ENCODE measurements at regions of chr15 and their contacts with region 1.

Region 1: DNA sequence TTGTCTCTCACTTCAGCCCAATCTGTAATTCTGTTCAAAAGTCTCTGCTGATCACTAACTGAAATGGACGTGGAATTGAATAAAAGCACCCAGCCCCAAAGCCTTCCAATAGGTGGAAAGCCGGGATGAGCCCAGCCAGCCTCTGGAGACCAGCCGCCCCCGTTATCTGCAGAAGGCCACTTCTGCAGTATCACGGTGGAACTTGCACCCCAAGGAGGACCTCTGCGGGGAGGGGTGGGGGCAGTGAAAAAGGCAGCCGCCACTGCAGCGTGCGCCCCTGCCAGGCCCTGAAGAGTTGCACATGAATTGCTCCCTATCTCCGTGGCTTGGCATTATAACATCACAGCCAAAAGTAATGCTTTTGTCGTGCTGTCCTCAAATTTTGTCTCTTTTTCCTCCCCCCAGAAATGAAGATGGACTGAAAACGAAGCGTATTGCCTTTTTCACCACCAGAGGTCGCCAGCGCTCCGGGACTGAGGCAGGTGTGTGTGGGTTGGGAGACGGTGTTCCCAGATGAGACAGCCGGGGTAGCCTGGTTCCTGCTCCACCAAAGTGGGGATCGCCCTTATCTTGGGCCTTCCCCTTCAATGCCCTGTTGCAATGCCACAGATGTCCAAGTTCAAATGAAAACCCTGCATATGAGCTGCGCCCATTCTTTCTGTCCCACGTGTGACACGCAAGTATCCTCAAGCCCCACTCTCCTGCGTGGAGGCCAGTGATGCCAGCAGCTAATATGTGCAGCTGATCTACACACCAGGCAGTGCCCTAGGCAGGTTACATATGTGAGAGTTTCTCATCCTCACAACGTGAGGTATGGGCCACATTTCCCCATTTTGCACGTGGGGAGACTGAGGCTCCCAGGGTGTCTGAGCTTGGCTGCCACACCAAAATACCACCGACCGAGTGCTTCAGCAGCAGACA is 96.0 kb downstream of the LRRK1 start:
- DNase-seq: peak; percentile 49
- ATAC-seq: peak; percentile 57
- H3K4me3 Mint-ChIP-seq: no peak overlapping the region
- H3K27ac Mint-ChIP-seq: no peak overlapping the region
- H3K4me1 Mint-ChIP-seq: no peaks in the 10 kb centered on the region
- H3K27me3 Mint-ChIP-seq: no peaks in the 10 kb centered on the region
- CTCF ChIP-seq: peak; percentile 56

Region 2: DNA sequence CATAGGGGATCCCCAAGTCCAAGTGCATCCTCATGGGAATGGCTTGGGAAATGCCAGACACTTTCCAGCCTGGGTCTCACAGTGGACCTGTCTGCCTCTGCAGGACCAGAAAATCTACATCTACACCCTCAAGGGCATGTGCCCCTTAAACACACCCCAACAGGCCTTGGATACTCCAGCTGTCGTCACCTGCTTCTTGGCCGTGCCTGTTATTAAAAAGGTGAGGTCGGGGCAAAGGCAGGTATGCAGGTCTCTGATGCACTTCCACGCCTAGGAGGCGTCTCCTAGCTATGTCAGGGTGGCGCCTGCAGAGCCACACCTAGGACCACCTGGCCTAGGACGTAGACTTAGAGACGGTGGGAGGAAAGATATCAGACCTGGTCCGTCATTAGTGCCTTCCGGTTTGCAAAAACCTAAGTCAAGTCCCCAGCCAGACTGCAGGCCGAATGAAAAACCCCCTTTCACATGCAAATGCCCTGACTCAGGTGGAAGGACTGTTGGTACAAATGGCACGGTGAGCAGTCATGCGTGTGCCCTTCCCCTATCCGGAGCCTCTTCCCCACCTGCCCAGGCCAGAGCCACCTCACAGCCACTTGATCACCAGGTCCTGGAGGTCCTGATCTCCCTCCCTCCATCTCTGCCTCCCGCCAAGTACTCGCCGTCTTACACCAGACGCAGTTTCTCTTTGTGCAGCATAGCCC is 47.4 kb after region 1 on chr15:
- CTCF ChIA-PET with region 1: no interaction called
- POLR2A ChIA-PET with region 1: no interaction called
- intact Hi-C with region 1: loop called (anchors 1 kb)
- DNase-seq: peak; percentile 24
- ATAC-seq: peak; percentile 94
- H3K4me3 Mint-ChIP-seq: peak overlapping the region; percentile 44
- H3K27ac Mint-ChIP-seq: peak overlapping the region; percentile 83
- H3K4me1 Mint-ChIP-seq: peaks cover 23% of the 10 kb centered on the region
- H3K27me3 Mint-ChIP-seq: no peaks in the 10 kb centered on the region
- CTCF ChIP-seq: no peak

Region 3: GRCh38 chr15:101088788-101089583 is 73.8 kb after region 1 on chr15:
- CTCF ChIA-PET with region 1: interaction called, 3 read pairs
- POLR2A ChIA-PET with region 1: no interaction called
- intact Hi-C with region 1: loop called (anchors 2 kb)
- DNase-seq: peak; percentile 86
- ATAC-seq: peak; percentile 98
- H3K4me3 Mint-ChIP-seq: no peak overlapping the region
- H3K27ac Mint-ChIP-seq: no peak overlapping the region
- H3K4me1 Mint-ChIP-seq: no peaks in the 10 kb centered on the region
- H3K27me3 Mint-ChIP-seq: no peaks in the 10 kb centered on the region
- CTCF ChIP-seq: peak; percentile 52